Activated CD8-positive, alpha-beta memory T cell treated with anti-CD3 and anti-CD28 coated beads, Interleukin-2, amount 10 ng/mL, durations not matched to agents 7 days and 5 days (primary cell): ENCODE measurements at regions of chr6 and their contacts with region 1.

Region 1: DNA sequence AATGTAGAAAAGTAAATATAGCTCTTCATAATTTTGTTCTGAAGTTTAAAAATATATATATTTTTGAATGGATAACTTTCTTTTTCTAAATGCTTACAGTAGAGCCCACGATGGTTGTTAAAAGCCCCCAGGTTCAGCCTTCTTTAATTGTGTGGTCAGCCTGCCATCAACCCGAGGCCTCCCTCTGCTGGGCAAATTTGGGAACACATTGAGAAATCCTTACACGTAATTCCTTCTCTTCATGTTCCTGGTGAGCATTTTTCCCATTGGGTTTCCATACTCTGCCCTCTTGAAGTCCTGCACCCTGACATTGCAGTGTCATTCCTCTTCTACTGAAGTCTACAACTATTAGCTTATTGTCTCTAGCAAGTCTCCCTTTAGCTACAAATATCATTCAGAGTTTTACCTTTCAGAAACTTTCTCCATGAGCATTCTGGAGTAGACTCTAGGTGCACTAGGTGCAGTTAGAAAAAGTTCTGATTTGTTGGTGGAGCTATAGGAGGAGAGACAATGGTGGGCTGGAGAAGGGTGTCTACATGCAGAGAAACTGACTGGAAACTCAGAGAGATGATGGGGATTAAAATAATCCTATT is 40.6 kb downstream of the TRIM38 start:
- DNase-seq: peak; percentile 64
- ATAC-seq: peak; percentile 64
- H3K4me3 Mint-ChIP-seq: no peak overlapping the region
- H3K27ac Mint-ChIP-seq: no peak overlapping the region
- H3K4me1 Mint-ChIP-seq: no peaks in the 10 kb centered on the region
- H3K27me3 Mint-ChIP-seq: no peaks in the 10 kb centered on the region

Region 2: DNA sequence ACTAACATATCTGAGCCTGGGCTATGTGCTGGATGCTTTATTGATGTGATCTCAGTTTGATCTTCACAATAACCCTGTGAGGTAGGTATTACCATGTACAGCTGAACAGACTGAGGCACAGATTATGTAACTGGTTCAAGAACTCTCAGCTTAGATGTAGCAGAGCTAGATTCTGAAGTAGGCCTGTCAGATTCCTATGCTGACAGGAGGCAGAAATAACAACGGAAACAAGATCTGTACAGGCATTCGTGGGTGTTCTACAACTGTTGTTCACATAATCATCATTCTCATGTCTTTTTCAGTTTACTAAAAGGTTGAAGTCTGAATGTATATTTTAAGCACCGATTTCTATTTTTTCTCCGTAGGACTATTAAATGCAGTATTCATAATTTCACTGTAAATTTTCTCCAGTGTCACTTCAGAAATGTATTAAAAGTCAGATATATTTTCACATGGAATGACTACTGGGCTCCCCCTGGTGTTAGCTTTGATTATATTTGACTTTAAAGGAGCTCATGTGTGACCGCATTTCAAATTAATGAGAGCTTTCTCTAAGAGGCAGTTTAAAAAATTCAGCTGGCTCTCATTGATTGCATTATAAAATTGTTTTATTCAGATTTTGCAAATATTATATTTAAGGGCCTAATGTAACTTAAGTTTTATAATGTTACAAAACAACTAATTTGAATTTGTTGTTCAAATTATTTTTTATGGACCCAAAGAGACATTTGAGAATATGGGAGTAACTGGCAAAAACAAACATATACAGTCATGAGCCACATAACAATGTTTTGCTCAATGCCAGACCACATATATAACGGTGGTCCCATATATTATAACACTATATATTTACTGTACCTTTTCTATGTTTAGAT is 285.1 kb before region 1 on chr6:
- CTCF ChIA-PET with region 1: interaction called, 20 read pairs
- DNase-seq: no peak
- ATAC-seq: no peak
- H3K4me3 Mint-ChIP-seq: no peak overlapping the region
- H3K27ac Mint-ChIP-seq: no peak overlapping the region
- H3K4me1 Mint-ChIP-seq: no peaks in the 10 kb centered on the region
- H3K27me3 Mint-ChIP-seq: peaks cover 11% of the 10 kb centered on the region

Region 3: DNA sequence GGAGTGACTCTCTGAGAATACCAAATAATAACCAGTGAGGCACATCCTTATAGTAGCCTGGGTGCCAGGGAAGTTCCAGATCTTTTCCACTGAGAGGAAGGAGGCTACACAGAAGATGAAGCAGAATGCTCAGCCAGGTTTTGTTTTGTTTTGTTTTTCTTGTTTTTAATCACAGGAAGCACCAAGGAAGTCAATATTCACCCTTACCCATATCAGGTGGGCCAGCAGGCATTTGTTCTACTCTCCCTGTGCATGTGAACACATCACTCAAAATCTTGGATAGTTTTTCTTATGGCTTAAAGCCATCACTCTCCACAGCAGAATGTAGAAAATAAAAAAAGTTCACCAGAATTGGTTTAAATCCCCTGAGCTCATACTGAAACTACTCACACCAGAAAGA is 181.9 kb before region 1 on chr6:
- CTCF ChIA-PET with region 1: no interaction called
- DNase-seq: no peak
- ATAC-seq: peak; percentile 20
- H3K4me3 Mint-ChIP-seq: no peak overlapping the region
- H3K27ac Mint-ChIP-seq: no peak overlapping the region
- H3K4me1 Mint-ChIP-seq: peaks cover 8% of the 10 kb centered on the region
- H3K27me3 Mint-ChIP-seq: peaks cover 14% of the 10 kb centered on the region

Region 4: DNA sequence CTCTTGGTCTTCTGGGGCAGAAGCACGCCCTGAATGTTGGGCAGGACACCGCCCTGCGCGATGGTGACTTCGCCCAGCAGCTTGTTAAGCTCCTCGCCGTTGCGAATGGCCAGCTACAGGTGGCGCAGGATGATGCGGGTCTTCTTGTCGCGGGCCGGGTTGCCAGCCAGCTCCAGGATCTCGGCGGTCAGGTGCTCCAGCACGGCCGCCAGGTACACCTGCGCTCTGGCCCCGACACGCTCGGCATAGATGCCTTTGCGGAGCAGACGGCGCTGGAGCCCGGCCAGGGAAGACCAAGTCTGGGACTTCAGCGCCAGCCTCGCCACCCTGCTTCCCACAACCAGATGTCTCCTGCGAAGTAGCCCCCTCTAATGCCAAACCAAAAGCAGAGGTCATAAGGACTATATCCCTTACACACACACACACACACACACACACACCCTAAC is 121.1 kb before region 1 on chr6:
- CTCF ChIA-PET with region 1: no interaction called
- DNase-seq: peak; percentile 53
- ATAC-seq: peak; percentile 85
- H3K4me3 Mint-ChIP-seq: peak overlapping the region; percentile 62
- H3K27ac Mint-ChIP-seq: peak overlapping the region; percentile 12
- H3K4me1 Mint-ChIP-seq: peaks cover 3% of the 10 kb centered on the region
- H3K27me3 Mint-ChIP-seq: no peaks in the 10 kb centered on the region

Region 5: DNA sequence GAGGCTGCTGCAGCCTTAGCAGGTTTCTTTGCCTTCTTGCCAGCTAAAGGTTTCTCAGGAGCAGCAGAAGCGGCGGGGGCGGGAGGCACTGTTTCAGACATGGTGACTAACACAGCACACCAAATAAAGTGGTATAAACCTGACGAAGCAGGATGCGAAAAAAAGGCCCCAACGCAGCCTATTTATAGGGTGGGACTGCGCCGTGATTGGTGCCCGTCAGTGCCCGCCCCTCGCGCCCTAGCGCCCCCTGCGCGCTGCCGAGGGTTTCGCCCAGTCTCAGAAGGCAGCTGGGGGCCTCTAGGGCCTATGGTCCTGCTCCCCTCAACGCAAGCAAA is 14.4 kb after region 1 on chr6:
- CTCF ChIA-PET with region 1: interaction called, 27 read pairs
- DNase-seq: peak; percentile 87
- ATAC-seq: peak; percentile 8
- H3K4me3 Mint-ChIP-seq: peak overlapping the region; percentile 59
- H3K27ac Mint-ChIP-seq: peak overlapping the region; percentile 88
- H3K4me1 Mint-ChIP-seq: peaks cover 37% of the 10 kb centered on the region
- H3K27me3 Mint-ChIP-seq: no peaks in the 10 kb centered on the region

Region 6: GRCh38 chr6:26025894-26026832 is 23.0 kb after region 1 on chr6:
- CTCF ChIA-PET with region 1: interaction called, 18 read pairs
- DNase-seq: peak; percentile 97
- ATAC-seq: peak; percentile 37
- H3K4me3 Mint-ChIP-seq: peak overlapping the region; percentile 83
- H3K27ac Mint-ChIP-seq: peak overlapping the region; percentile 99
- H3K4me1 Mint-ChIP-seq: peaks cover 81% of the 10 kb centered on the region
- H3K27me3 Mint-ChIP-seq: peaks cover 4% of the 10 kb centered on the region

Region 7: GRCh38 chr6:26075063-26075717 is 72.0 kb after region 1 on chr6:
- CTCF ChIA-PET with region 1: no interaction called
- DNase-seq: no peak
- ATAC-seq: no peak
- H3K4me3 Mint-ChIP-seq: no peak overlapping the region
- H3K27ac Mint-ChIP-seq: no peak overlapping the region
- H3K4me1 Mint-ChIP-seq: no peaks in the 10 kb centered on the region
- H3K27me3 Mint-ChIP-seq: peaks cover 6% of the 10 kb centered on the region